SK-N-SH (cell line): ENCODE measurements at regions of chr5 and their contacts with region 1.

Region 1: GRCh38 chr5:142888469-142889085 is 118.4 kb downstream of the ARHGAP26 start:
- DNase-seq: peak; percentile 70
- H3K4me3 ChIP-seq: no peak overlapping the region; a peak in 1 of 4 replicates
- H3K27ac ChIP-seq: no peak overlapping the region
- H3K4me1 ChIP-seq: no peaks in the 10 kb centered on the region; a peak in 2 of 4 replicates
- H3K27me3 ChIP-seq: no peaks in the 10 kb centered on the region
- CTCF ChIP-seq: peak; percentile 78
- EP300 ChIP-seq: no peak
- RAD21 ChIP-seq: peak; percentile 88

Region 2: GRCh38 chr5:142520886-142521285 is 367.7 kb before region 1 on chr5:
- CTCF ChIA-PET with region 1: no interaction called
- POLR2A ChIA-PET with region 1: no interaction called
- DNase-seq: no peak
- H3K4me3 ChIP-seq: no peak overlapping the region
- H3K27ac ChIP-seq: no peak overlapping the region
- H3K4me1 ChIP-seq: 0 out of 4 replicates have a peak, but pooled peaks cover 0 to 5% of the 10 kb centered on the region in 2 experiments
- H3K27me3 ChIP-seq: no peaks in the 10 kb centered on the region
- CTCF ChIP-seq: no peak
- EP300 ChIP-seq: no peak
- RAD21 ChIP-seq: no peak

Region 3: DNA sequence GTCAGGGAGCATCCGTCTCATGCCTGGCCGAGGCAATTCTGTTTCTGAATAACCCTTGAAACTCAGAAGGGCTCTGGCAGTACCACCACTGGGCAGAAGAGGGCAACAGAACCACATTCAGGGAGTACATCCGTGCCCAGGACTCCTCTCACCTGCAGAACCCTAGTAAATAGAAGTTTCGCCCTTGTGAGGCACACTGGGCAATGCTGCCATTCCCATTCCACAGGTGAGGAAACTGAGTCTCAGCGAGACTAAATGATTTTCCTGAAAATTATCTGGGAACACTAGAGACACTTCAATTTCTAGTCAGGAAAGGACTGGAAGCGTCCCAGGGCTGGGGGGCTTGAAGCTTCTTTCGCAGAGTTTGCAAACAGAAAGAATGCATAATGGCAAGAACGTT is 277.4 kb before region 1 on chr5:
- CTCF ChIA-PET with region 1: interaction called, 10 read pairs
- POLR2A ChIA-PET with region 1: no interaction called
- DNase-seq: peak; percentile 76
- H3K4me3 ChIP-seq: no peak overlapping the region
- H3K27ac ChIP-seq: no peak overlapping the region
- H3K4me1 ChIP-seq: peaks cover 2 to 14% of the 10 kb centered on the region in 2 experiments; a peak in 2 of 4 replicates
- H3K27me3 ChIP-seq: no peaks in the 10 kb centered on the region
- CTCF ChIP-seq: peak; percentile 85
- EP300 ChIP-seq: no peak
- RAD21 ChIP-seq: peak; percentile 98

Region 4: GRCh38 chr5:142735331-142736246 is 153.0 kb before region 1 on chr5:
- CTCF ChIA-PET with region 1: interaction called, 13 read pairs
- POLR2A ChIA-PET with region 1: no interaction called
- DNase-seq: no peak
- H3K4me3 ChIP-seq: no peak overlapping the region
- H3K27ac ChIP-seq: no peak overlapping the region
- H3K4me1 ChIP-seq: peaks cover 7 to 15% of the 10 kb centered on the region in 2 experiments; a peak in 3 of 4 replicates
- H3K27me3 ChIP-seq: no peaks in the 10 kb centered on the region
- CTCF ChIP-seq: no peak
- EP300 ChIP-seq: no peak
- RAD21 ChIP-seq: no peak

Region 5: GRCh38 chr5:142748568-142749249 is 139.9 kb before region 1 on chr5:
- CTCF ChIA-PET with region 1: interaction called, 185 read pairs
- POLR2A ChIA-PET with region 1: no interaction called
- DNase-seq: peak; percentile 16
- H3K4me3 ChIP-seq: no peak overlapping the region; a peak in 1 of 4 replicates
- H3K27ac ChIP-seq: peak overlapping the region in 1 of 2 experiments; percentile 70; a peak in 2 of 4 replicates
- H3K4me1 ChIP-seq: peaks cover 11 to 26% of the 10 kb centered on the region in 2 experiments
- H3K27me3 ChIP-seq: no peaks in the 10 kb centered on the region
- CTCF ChIP-seq: peak; percentile 49
- EP300 ChIP-seq: no peak
- RAD21 ChIP-seq: peak; percentile 80

Region 6: GRCh38 chr5:142860270-142860669 is 28.3 kb before region 1 on chr5:
- CTCF ChIA-PET with region 1: interaction called, 14 read pairs
- POLR2A ChIA-PET with region 1: no interaction called
- DNase-seq: no peak
- H3K4me3 ChIP-seq: no peak overlapping the region
- H3K27ac ChIP-seq: peak overlapping the region in 1 of 2 experiments; percentile 39; a peak in 2 of 4 replicates
- H3K4me1 ChIP-seq: peaks cover 10 to 53% of the 10 kb centered on the region in 2 experiments; a peak in 2 of 4 replicates
- H3K27me3 ChIP-seq: no peaks in the 10 kb centered on the region
- CTCF ChIP-seq: no peak
- EP300 ChIP-seq: no peak
- RAD21 ChIP-seq: no peak

Region 7: DNA sequence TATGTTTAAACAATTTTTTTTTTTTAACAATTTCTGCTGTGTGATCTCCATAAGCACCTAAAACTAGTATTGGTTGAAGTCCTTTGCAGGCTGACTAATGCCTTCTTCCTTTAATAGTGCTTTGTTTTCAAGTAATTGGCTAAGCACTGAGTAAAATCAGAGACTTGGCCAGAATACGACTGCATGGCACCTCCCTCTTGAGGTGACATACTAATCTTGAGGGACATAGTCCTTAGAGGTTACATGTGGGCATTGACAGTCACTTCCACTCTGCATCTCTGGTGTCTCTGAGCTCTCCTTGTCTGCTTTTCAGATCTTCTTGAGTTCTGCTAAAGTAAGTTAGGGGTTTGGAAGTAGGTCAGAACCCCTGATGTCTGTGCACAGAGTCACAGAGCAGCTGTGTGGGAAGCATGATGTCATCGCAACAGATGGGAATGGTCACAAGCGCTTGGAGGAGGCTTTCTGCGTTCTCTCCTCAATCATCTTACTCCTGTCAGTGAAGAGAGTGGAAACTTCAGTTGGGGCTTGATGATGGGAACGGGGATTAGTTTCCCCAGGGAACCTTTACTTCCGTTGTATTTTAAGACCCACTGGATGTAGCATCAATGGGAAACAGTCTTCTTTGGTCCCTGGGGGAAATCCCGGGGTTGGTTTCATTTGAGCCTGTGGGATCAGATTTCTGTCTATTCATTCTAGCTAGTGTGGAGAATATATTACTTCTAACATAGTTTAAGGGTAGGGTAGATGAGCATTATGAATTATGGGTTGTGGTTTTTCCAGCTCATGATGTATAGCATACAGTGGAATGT is 18.5 kb after region 1 on chr5:
- CTCF ChIA-PET with region 1: interaction called, 51 read pairs
- POLR2A ChIA-PET with region 1: no interaction called
- DNase-seq: no peak
- H3K4me3 ChIP-seq: no peak overlapping the region
- H3K27ac ChIP-seq: no peak overlapping the region
- H3K4me1 ChIP-seq: peaks cover 0 to 8% of the 10 kb centered on the region in 2 experiments; a peak in 1 of 4 replicates
- H3K27me3 ChIP-seq: no peaks in the 10 kb centered on the region
- CTCF ChIP-seq: no peak
- EP300 ChIP-seq: no peak
- RAD21 ChIP-seq: no peak

Region 8: DNA sequence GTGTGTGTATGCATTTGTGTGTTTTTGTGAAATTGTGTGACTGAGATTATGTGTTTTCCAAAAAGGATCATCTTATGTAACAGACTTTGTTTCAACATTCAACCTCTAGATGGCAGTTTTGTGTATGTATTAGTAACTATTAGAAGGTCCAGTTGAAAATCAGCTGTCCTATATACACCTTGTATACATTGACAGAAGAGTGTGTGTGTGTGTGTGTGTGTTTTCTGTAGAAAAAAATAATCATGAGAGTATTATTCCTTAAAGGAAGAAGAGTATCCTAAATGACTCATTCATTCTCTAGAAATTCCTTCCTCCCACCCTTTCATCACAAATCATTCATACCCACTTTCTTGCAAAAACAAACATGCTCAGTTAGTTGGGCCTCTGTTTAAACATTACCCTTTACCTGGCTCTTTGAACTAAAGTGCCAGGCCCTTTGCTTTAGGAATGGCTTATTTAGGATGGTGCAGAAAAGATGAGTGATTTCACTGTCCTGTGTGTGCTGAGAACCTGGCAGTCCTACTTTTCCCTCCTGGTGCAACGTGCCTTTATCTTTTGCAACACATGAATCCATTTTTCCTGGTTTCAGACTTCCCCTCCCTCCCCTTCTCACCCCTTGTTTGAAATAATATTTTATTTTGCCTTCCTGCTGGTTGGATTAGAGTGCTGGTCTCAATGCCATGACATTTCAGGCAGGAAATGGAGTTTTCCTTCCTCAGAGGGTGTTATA is 33.8 kb after region 1 on chr5:
- CTCF ChIA-PET with region 1: interaction called, 10 read pairs
- POLR2A ChIA-PET with region 1: no interaction called
- DNase-seq: peak; percentile 51
- H3K4me3 ChIP-seq: no peak overlapping the region
- H3K27ac ChIP-seq: no peak overlapping the region
- H3K4me1 ChIP-seq: peaks cover 3 to 11% of the 10 kb centered on the region in 2 experiments
- H3K27me3 ChIP-seq: no peaks in the 10 kb centered on the region
- CTCF ChIP-seq: peak; percentile 66
- EP300 ChIP-seq: no peak
- RAD21 ChIP-seq: peak; percentile 79